ENCODE measurements at regions of chr1 and their contacts with region 1.

Region 1: GRCh38 chr1:19918057-19918456 is 5.4 kb downstream of the PLA2G2E start:
- DNase-seq: peak; percentile 61 to 64
- ATAC-seq: peak; percentile 79 to 86; a peak in 5 of 6 replicates
- H3K4me3 ChIP-seq: no peak overlapping the region
- H3K27ac ChIP-seq: no peak overlapping the region
- H3K4me1 ChIP-seq: no peaks in the 10 kb centered on the region
- CTCF ChIP-seq: peak; percentile 75
- EP300 ChIP-seq: no peak
- POLR2A ChIP-seq: no peak
- RAD21 ChIP-seq: peak; percentile 88 to 89

Region 2: DNA sequence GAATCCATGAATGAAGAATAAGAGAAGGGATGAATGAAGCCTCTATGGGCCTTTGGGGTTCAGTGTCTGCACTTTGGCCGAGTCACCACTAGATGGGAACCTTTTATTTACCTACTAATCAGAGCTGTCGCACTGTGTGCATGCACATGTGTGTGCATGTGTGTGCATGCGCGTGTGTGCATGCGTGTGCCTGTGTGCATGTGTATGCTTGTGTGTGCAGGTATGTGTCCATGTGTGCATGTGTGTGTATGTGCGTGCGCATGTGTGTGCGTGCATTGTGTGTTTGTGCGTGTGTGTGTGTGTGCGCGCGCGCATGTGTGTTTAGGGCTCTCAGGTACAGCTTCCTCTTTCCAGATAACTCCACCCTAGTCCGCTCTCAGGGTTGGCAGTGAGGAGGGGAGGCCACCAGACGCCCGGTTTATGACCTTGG is 247.5 kb after region 1 on chr1:
- CTCF ChIA-PET with region 1: interaction called, 12 read pairs
- POLR2A ChIA-PET with region 1: no interaction called
- DNase-seq: peak; percentile 16 to 28
- ATAC-seq: peak; percentile 56 to 79; a peak in 4 of 6 replicates
- H3K4me3 ChIP-seq: no peak overlapping the region
- H3K27ac ChIP-seq: no peak overlapping the region
- H3K4me1 ChIP-seq: no peaks in the 10 kb centered on the region
- CTCF ChIP-seq: peak; percentile 21; the same call in 1 of the 3 replicates
- EP300 ChIP-seq: no peak
- POLR2A ChIP-seq: no peak
- RAD21 ChIP-seq: peak in 1 of 2 experiments; percentile 28; a peak in 1 of 5 replicates

Measured in A549 (cell line).